Activated CD8-positive, alpha-beta T cell treated with anti-CD3 and anti-CD28 coated beads for 36 hours (primary cell): ENCODE measurements at regions of chr11 and their contacts with region 1.

Region 1: GRCh38 chr11:117107701-117108590 is 9.7 kb upstream of the SIK3 start:
- DNase-seq: no peak
- ATAC-seq: no peak
- H3K4me3 Mint-ChIP-seq: no peak overlapping the region
- H3K27ac Mint-ChIP-seq: no peak overlapping the region
- H3K4me1 Mint-ChIP-seq: no peaks in the 10 kb centered on the region
- H3K27me3 Mint-ChIP-seq: no peaks in the 10 kb centered on the region
- CTCF ChIP-seq: no peak

Region 2: DNA sequence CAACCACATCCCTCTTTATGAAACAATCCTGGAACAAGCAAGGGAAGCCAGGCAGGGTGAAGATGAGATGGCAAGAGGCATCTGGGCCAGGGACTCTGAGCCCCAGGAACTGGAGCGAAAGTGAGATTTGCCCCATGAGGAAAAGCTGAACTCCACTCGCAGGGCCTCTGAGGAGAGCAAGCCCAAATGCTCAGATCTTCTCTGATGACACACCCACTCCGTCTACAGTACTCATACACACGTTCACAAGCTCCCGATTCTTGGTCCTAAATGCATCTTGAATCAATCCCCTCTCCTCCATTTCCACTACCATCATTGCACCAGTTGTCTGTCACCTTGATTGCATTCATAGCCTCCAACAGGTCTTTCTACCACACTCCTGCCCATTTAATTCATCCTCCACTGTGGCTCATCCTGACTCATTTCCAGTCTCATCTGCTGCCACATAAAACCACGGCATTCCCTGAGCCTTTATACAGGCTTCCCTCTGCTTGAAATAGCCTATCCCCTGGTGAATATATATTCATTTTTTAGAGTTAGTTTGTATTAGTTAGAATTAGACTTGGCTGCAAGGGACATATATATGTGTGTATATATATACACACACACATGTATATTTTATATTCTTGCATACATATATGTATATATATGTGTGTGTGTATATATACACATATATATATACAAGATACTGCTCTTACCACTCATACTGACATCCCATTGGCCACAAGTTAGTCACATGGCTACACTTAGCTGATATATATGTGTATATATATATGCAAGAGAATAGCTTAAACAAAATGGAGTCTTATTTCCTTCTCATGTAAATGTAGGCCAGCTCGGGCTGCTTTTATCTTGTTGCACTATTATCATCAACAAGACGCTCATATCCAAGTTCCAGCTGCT is 314.8 kb before region 1 on chr11:
- CTCF ChIA-PET with region 1: interaction called, 19 read pairs
- POLR2A ChIA-PET with region 1: no interaction called
- intact Hi-C with region 1: loop called (anchors 1 kb)
- DNase-seq: no peak
- ATAC-seq: no peak
- H3K4me3 Mint-ChIP-seq: no peak overlapping the region
- H3K27ac Mint-ChIP-seq: no peak overlapping the region
- H3K4me1 Mint-ChIP-seq: peaks cover 7% of the 10 kb centered on the region
- H3K27me3 Mint-ChIP-seq: no peaks in the 10 kb centered on the region
- CTCF ChIP-seq: no peak

Region 3: DNA sequence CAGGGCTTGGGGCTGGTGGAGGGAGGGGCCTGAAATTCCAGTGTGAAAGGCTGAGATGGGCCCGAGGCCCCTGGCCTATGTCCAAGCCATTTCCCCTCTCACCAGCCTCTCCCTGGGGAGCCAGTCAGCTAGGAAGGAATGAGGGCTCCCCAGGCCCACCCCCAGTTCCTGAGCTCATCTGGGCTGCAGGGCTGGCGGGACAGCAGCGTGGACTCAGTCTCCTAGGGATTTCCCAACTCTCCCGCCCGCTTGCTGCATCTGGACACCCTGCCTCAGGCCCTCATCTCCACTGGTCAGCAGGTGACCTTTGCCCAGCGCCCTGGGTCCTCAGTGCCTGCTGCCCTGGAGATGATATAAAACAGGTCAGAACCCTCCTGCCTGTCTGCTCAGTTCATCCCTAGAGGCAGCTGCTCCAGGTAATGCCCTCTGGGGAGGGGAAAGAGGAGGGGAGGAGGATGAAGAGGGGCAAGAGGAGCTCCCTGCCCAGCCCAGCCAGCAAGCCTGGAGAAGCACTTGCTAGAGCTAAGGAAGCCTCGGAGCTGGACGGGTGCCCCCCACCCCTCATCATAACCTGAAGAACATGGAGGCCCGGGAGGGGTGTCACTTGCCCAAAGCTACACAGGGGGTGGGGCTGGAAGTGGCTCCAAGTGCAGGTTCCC is 278.3 kb before region 1 on chr11 and contains the start of gene APOC3:
- CTCF ChIA-PET with region 1: no interaction called
- POLR2A ChIA-PET with region 1: no interaction called
- intact Hi-C with region 1: no loop called
- DNase-seq: no peak
- ATAC-seq: no peak
- H3K4me3 Mint-ChIP-seq: no peak within 1 kb of the TSS
- H3K27ac Mint-ChIP-seq: no peak within 1 kb of the TSS
- H3K4me1 Mint-ChIP-seq: no peaks in the 10 kb centered on the region
- H3K27me3 Mint-ChIP-seq: no peaks in the 10 kb centered on the region
- CTCF ChIP-seq: no peak
- total RNA-seq, gene APOC3: not detected

Region 4: DNA sequence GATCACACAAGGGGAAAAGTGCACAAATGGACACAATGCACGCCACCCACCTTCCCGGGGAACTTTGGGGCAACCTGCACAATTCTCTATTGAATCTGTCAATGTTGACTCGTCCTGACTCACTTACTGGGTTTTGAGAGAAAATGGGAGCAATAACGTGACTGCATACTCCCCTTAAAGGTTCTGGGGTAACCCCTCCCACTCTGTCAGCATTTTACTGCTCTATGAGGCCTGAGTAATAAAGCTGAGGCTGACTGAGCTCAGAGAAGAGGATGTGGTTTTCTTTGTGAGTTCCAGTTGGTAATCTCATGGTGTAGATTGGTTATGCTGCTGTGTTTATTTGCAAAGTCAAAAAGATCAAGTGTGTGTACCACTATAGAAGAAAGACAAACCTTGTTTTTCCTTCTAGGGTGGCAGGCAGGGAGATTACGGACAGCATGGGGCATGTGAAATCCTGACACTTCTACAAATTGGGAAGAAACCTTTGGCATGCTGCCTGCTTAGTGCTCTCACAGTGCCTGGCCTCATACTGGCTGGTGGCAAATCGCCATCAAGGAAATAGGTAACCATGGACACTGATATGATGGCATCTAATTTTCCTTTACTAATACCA is 254.4 kb before region 1 on chr11:
- CTCF ChIA-PET with region 1: interaction called, 12 read pairs
- POLR2A ChIA-PET with region 1: interaction called, 4 read pairs
- intact Hi-C with region 1: no loop called
- DNase-seq: peak; percentile 74
- ATAC-seq: peak; percentile 94
- H3K4me3 Mint-ChIP-seq: peak overlapping the region; percentile 23
- H3K27ac Mint-ChIP-seq: peak overlapping the region; percentile 87
- H3K4me1 Mint-ChIP-seq: peaks cover 58% of the 10 kb centered on the region
- H3K27me3 Mint-ChIP-seq: no peaks in the 10 kb centered on the region
- CTCF ChIP-seq: no peak

Region 5: GRCh38 chr11:116890193-116890592 is 217.8 kb before region 1 on chr11:
- CTCF ChIA-PET with region 1: interaction called, 28 read pairs
- POLR2A ChIA-PET with region 1: no interaction called
- intact Hi-C with region 1: no loop called
- DNase-seq: peak; percentile 40
- ATAC-seq: peak; percentile 90
- H3K4me3 Mint-ChIP-seq: no peak overlapping the region
- H3K27ac Mint-ChIP-seq: peak overlapping the region; percentile 44
- H3K4me1 Mint-ChIP-seq: peaks cover 13% of the 10 kb centered on the region
- H3K27me3 Mint-ChIP-seq: no peaks in the 10 kb centered on the region
- CTCF ChIP-seq: no peak

Region 6: GRCh38 chr11:116927163-116927974 is 180.6 kb before region 1 on chr11:
- CTCF ChIA-PET with region 1: interaction called, 11 read pairs
- POLR2A ChIA-PET with region 1: no interaction called
- intact Hi-C with region 1: no loop called
- DNase-seq: peak; percentile 79
- ATAC-seq: peak; percentile 53
- H3K4me3 Mint-ChIP-seq: peak overlapping the region; percentile 12
- H3K27ac Mint-ChIP-seq: peak overlapping the region; percentile 70
- H3K4me1 Mint-ChIP-seq: peaks cover 76% of the 10 kb centered on the region
- H3K27me3 Mint-ChIP-seq: no peaks in the 10 kb centered on the region
- CTCF ChIP-seq: peak; percentile 79